Esophagus squamous epithelium (tissue), 5 donors: ENCODE measurements at regions of chr1 and their contacts with region 1.

Region 1: GRCh38 chr1:110407260-110408210 is at the start of gene LAMTOR5:
- DNase-seq: peak; percentile 55
- H3K4me3 ChIP-seq: peak within 1 kb of the TSS; percentile 91 to 100 (median 96)
- H3K27ac ChIP-seq: peak within 1 kb of the TSS; percentile 96 to 99 (median 98)
- H3K4me1 ChIP-seq: peaks cover 4 to 36% (median 15%) of the 10 kb centered on the region in 3 donors
- H3K27me3 ChIP-seq: no peaks in the 10 kb centered on the region
- CTCF ChIP-seq: peak in 3 of 6 experiments; percentile 15 to 52 (median 17)
- POLR2A ChIP-seq: peak in 3 of 4 donors; percentile 84 to 94 (median 88)
- total RNA-seq, gene LAMTOR5: 31.6 to 113 (median 99.1) TPM

Region 2: GRCh38 chr1:110262846-110263631 is 144.5 kb before region 1 on chr1:
- intact Hi-C with region 1: no loop called
- DNase-seq: no peak
- H3K4me3 ChIP-seq: no peak overlapping the region
- H3K27ac ChIP-seq: no peak overlapping the region
- H3K4me1 ChIP-seq: peaks cover 0 to 17% (median 3%) of the 10 kb centered on the region in 3 donors
- H3K27me3 ChIP-seq: no peaks in the 10 kb centered on the region
- CTCF ChIP-seq: no peak
- POLR2A ChIP-seq: no peak

Region 3: GRCh38 chr1:110338886-110339406 is 68.6 kb before region 1 on chr1 and contains the start of gene RBM15:
- intact Hi-C with region 1: loop called (anchors 5 kb)
- DNase-seq: peak; percentile 99
- H3K4me3 ChIP-seq: peak within 1 kb of the TSS; percentile 83 to 90 (median 88)
- H3K27ac ChIP-seq: peak within 1 kb of the TSS; percentile 97 to 98 (median 98)
- H3K4me1 ChIP-seq: peaks cover 23 to 58% (median 40%) of the 10 kb centered on the region in 3 donors
- H3K27me3 ChIP-seq: no peaks in the 10 kb centered on the region
- CTCF ChIP-seq: no peak
- POLR2A ChIP-seq: no peak
- total RNA-seq, gene RBM15: 10.5 to 39.5 (median 23.0) TPM

Region 4: DNA sequence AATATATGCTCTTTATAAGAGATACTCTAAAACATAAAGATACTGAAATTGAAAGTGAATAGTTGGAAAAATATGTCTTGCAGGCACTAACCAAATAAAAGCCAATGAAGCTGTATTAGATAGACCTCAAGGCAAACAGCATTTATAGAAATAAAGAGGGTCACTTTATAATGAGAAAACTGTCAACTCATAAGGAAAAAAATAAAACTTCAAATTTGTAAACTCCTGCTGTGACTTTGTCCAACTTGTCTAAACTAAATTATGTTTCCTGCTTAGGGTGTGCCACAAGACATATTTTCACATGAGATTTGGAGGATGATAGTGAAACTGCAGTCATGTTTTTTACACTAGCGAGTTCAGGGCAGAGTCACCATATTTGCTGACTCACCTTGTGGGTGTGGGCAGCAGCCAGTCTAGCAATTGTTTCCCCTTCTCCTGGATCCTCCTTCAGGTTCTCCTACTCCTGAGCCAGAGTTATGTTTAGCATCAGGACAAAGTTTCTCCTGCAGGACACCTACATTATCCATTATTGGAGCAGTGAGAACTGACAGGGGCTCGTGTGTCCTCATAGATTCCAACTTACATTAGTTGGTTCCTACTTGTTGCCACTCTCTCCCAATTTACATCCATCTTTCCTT is 509.3 kb after region 1 on chr1:
- intact Hi-C with region 1: no loop called
- DNase-seq: no peak
- H3K4me3 ChIP-seq: peak overlapping the region in 1 of 4 donors; percentile 23
- H3K27ac ChIP-seq: no peak overlapping the region
- H3K4me1 ChIP-seq: no peaks in the 10 kb centered on the region
- H3K27me3 ChIP-seq: no peaks in the 10 kb centered on the region
- CTCF ChIP-seq: no peak
- POLR2A ChIP-seq: no peak